K562 (cell line): ENCODE measurements at regions of chr18 and their contacts with region 1.

Region 1: GRCh38 chr18:29449424-29449823 is 1272.5 kb upstream of the CDH2 start:
- DNase-seq: no peak
- ATAC-seq: no peak
- H3K4me3 ChIP-seq: no peak overlapping the region
- H3K27ac ChIP-seq: no peak overlapping the region
- H3K4me1 ChIP-seq: no peaks in the 10 kb centered on the region
- H3K27me3 ChIP-seq: no peaks in the 10 kb centered on the region
- CTCF ChIP-seq: no peak
- EP300 ChIP-seq: no peak
- POLR2A ChIP-seq: no peak
- RAD21 ChIP-seq: no peak

Region 2: DNA sequence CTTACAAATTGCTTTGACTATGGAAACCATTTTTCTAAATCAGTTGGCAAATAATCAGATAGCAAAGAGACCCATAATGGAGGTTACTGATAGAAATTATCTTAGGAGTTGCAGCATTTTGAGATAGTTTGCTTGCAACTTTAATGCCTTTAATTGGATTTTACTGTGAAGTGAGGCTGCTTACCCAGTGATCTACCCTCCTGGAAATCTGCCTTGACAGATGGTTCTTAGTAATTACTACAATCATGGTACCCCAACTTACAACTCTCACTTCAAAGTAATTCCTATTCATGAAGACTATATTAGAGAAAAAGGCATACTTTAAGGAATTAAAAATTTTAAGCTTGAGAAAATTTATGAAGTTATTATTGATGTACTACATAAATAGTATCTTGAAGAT is 16.1 kb after region 1 on chr18:
- CTCF ChIA-PET with region 1: no interaction called
- POLR2A ChIA-PET with region 1: no interaction called
- in situ Hi-C with region 1: no loop called
- intact Hi-C with region 1: no loop called
- DNase-seq: no peak
- ATAC-seq: no peak
- H3K4me3 ChIP-seq: no peak overlapping the region
- H3K27ac ChIP-seq: no peak overlapping the region
- H3K4me1 ChIP-seq: no peaks in the 10 kb centered on the region
- H3K27me3 ChIP-seq: no peaks in the 10 kb centered on the region
- CTCF ChIP-seq: no peak
- EP300 ChIP-seq: no peak
- POLR2A ChIP-seq: no peak
- RAD21 ChIP-seq: no peak

Region 3: DNA sequence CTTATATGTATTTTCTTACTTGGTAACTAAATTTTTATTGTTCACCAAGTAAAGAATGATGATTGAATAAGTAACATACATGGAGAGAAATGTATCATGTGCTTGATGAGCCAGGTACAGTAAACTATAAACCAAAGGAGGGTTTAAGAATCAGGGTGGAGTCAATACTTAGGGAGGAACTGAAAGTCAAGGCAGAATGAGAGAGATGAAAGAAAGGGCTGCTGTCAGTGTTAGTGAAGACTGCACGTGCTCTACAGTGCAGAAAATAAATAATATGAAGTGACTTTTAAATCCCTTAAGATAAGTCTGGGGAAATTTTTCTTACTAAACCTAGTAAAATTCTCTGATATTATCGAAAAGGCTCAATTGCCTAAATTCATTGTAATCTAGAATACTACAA is 607.1 kb after region 1 on chr18:
- CTCF ChIA-PET with region 1: no interaction called
- POLR2A ChIA-PET with region 1: no interaction called
- in situ Hi-C with region 1: no loop called
- intact Hi-C with region 1: no loop called
- DNase-seq: no peak
- ATAC-seq: no peak
- H3K4me3 ChIP-seq: no peak overlapping the region
- H3K27ac ChIP-seq: no peak overlapping the region
- H3K4me1 ChIP-seq: no peaks in the 10 kb centered on the region
- H3K27me3 ChIP-seq: no peaks in the 10 kb centered on the region
- CTCF ChIP-seq: no peak
- EP300 ChIP-seq: no peak
- POLR2A ChIP-seq: no peak
- RAD21 ChIP-seq: no peak

Region 4: GRCh38 chr18:30748541-30748940 is 1299.1 kb after region 1 on chr18:
- CTCF ChIA-PET with region 1: no interaction called
- POLR2A ChIA-PET with region 1: no interaction called
- in situ Hi-C with region 1: loop called (anchors 10 kb)
- intact Hi-C with region 1: no loop called
- DNase-seq: no peak
- ATAC-seq: no peak
- H3K4me3 ChIP-seq: no peak overlapping the region
- H3K27ac ChIP-seq: no peak overlapping the region
- H3K4me1 ChIP-seq: no peaks in the 10 kb centered on the region
- H3K27me3 ChIP-seq: no peaks in the 10 kb centered on the region
- CTCF ChIP-seq: no peak
- EP300 ChIP-seq: no peak
- POLR2A ChIP-seq: no peak
- RAD21 ChIP-seq: no peak